ENCODE measurements at regions of chr3 and their contacts with region 1.

Region 1: GRCh38 chr3:69108811-69109210 is 13.6 kb downstream of the LMOD3 start:
- DNase-seq: no peak
- H3K4me3 Mint-ChIP-seq: no peak overlapping the region
- H3K27ac Mint-ChIP-seq: no peak overlapping the region
- H3K4me1 Mint-ChIP-seq: peaks cover 14% of the 10 kb centered on the region
- H3K27me3 Mint-ChIP-seq: no peaks in the 10 kb centered on the region

Region 2: DNA sequence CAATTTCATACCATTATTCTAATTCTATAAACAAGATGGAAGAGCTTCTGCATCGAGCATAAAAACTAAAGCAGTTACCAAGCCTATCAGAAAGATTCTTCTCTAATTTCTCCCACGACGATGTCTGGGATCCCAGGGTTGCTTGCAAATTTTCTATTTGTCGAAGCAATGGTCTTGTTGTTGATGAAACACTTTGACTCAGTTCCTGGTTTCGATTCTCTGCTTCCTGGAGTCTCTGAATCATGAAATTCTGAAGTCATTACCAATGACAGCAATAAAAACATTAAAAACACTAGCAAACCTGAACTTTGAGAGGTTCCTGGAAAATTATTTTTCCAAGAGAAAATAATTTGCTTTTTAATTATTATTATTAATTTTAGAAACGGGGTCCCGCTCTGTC is 75.3 kb before region 1 on chr3:
- intact Hi-C with region 1: no loop called
- DNase-seq: no peak
- H3K4me3 Mint-ChIP-seq: no peak overlapping the region
- H3K27ac Mint-ChIP-seq: peak overlapping the region; percentile 78
- H3K4me1 Mint-ChIP-seq: peaks cover 18% of the 10 kb centered on the region
- H3K27me3 Mint-ChIP-seq: no peaks in the 10 kb centered on the region

Region 3: DNA sequence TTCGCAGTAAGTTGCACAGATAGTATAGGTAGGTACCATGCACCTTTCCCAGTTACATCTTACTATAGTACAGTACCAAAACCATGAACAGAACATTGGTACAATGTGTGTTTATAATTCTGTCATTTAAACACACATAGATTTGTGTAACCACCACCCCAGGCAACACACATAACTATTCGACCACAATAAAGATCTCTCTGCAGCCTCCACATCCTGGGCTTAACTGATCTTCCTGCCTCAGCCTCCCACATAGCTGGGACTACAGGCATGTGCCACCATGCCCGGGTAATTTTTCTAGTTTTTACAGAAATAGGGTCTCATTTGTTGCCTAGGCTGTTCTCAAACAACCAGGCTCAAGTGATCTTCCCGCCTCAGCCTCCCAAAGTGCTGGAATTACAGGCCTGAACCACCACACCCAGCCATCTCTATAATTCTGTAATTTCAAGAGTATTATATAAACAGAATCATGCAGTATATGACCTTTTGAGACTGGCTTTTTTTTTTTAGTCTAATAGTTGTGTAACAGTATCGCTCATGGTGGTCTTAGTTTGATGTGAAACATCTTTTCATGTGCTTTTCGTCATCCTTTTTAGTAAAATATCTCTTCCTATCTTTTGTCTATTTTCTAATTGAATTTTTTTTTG is 43.4 kb before region 1 on chr3:
- intact Hi-C with region 1: loop called (anchors 5 kb)
- DNase-seq: no peak
- H3K4me3 Mint-ChIP-seq: peak overlapping the region; percentile 47
- H3K27ac Mint-ChIP-seq: peak overlapping the region; percentile 71
- H3K4me1 Mint-ChIP-seq: peaks cover 43% of the 10 kb centered on the region
- H3K27me3 Mint-ChIP-seq: no peaks in the 10 kb centered on the region